GM10248 (cell line): ENCODE measurements at regions of chr5 and their contacts with region 1.

Region 1: DNA sequence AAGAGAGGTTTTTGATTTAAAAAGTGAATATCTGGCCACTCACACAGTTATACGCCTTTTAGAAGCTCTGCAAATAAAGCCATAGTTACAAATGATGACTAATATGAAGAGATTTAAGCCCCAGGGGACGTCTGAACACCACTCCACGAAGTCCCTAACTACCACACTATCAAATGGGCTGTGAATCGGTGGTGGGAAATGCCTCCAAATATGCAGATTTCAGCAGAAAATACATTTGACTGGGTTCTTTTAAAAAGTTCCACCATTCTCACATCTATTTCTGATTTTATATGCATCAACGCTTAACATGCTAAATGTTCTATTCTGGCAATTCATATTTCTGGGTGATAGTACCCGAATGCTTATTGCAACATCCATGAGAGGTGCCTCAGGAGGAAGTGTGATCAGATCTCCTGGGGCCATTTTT is 22.5 kb downstream of the TICAM2 start:
- DNase-seq: peak; percentile 38
- CTCF ChIP-seq: no peak

Region 2: GRCh38 chr5:115544436-115545350 is 35.1 kb before region 1 on chr5 and contains the start of gene FEM1C:
- CTCF ChIA-PET with region 1: interaction called, 62 read pairs
- POLR2A ChIA-PET with region 1: interaction called, 4 read pairs
- DNase-seq: peak; percentile 96
- CTCF ChIP-seq: no peak

Region 3: DNA sequence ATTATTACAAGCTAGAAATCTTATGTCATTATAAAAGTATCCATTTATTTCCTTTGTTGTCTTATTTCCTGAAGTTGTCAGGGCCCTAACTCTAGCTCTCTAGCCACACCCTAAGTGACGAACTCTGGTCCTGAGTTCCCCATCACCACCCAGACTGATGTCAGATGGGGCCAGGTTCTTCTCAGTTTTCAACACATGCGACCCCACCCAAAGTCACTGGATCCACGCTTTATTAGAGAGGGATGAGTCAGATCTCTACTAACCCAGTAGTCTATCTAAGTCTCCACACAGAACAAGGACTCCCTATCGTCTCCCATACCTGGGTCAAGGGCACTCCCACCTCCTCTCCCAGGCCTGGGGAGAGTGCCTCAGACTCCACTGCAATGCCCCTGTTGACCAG is 28.3 kb before region 1 on chr5:
- CTCF ChIA-PET with region 1: interaction called, 62 read pairs
- POLR2A ChIA-PET with region 1: interaction called, 4 read pairs
- DNase-seq: no peak
- CTCF ChIP-seq: no peak

Region 4: DNA sequence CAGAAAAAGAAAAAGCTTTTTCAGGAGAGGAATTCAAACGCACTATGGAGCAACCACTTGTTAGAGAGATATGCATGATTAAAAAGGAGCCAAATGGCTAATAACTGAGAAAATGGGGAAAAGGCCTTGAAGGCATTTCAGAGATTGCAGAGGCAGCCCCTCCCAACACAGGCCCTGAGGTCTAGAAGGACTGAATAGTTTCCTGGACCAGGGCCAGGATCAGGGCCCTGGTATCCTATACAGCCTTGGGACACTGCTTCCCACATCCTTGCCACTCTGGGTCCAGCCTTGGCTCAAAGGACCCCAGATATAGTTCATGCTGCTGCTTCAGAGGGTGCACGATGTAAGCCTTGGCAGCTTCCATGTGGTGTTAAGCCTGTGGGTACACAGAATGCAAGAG is 14.5 kb before region 1 on chr5:
- CTCF ChIA-PET with region 1: interaction called, 12 read pairs
- POLR2A ChIA-PET with region 1: no interaction called
- DNase-seq: no peak
- CTCF ChIP-seq: no peak